Aorta (tissue), 5 donors: ENCODE measurements at regions of chr11 and their contacts with region 1.

Region 1: DNA sequence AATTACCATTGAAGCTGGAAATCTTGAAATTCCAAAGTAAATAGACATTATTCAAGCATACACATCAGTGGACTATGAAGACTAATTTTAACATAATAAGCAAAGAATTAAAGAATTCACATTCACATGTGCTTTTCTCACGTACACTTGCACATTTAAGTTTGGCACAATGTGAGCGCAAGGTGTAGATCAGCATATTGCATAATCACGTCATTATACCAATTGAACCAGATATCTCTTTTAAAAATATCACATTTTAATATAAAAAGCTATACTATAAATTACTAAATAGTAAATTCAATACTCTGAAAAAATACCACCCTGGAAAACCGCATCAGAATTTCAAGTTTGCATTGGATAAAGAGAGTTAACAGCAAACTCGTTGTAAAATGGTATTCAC is 60.7 kb downstream of the SESN3 start:
- DNase-seq: no peak
- ATAC-seq: no peak
- H3K4me3 ChIP-seq: no peak overlapping the region
- H3K27ac ChIP-seq: no peak overlapping the region
- H3K4me1 ChIP-seq: no peaks in the 10 kb centered on the region
- H3K27me3 ChIP-seq: no peaks in the 10 kb centered on the region

Region 2: GRCh38 chr11:95711162-95711944 is 541.1 kb after region 1 on chr11:
- intact Hi-C with region 1: loop called in 1 of 2 experiments (anchors 5 kb)
- DNase-seq: no peak
- ATAC-seq: no peak
- H3K4me3 ChIP-seq: no peak overlapping the region
- H3K27ac ChIP-seq: no peak overlapping the region
- H3K4me1 ChIP-seq: peaks cover 0 to 2% of the 10 kb centered on the region in 2 donors
- H3K27me3 ChIP-seq: no peaks in the 10 kb centered on the region